Activated naive CD4-positive, alpha-beta T cell treated with anti-CD3 and anti-CD28 coated beads for 36 hours (primary cell): ENCODE measurements at regions of chr11 and their contacts with region 1.

Region 1: DNA sequence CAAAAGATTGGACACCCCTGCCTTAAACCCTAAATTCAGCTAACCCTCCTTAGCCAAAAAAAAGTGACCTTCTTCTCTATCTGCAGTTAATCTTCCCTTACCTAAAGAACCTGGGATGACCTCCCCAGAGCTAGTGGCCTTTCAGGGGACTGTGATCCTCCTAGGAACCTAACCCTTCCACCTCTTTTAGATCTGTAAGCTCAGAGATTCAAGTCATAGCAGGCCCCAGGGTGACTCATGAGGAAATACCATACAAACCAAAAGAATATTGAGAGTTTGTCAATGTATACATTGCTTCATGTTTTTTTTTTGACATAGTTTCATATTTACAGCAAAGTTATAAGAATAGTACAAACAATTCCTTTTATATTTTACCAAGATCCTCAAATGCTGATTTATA is 38.3 kb upstream of the CXCR5 start:
- DNase-seq: peak; percentile 69
- H3K4me3 Mint-ChIP-seq: no peak overlapping the region
- H3K27ac Mint-ChIP-seq: peak overlapping the region; percentile 63
- H3K4me1 Mint-ChIP-seq: peaks cover 38% of the 10 kb centered on the region
- H3K27me3 Mint-ChIP-seq: no peaks in the 10 kb centered on the region

Region 2: DNA sequence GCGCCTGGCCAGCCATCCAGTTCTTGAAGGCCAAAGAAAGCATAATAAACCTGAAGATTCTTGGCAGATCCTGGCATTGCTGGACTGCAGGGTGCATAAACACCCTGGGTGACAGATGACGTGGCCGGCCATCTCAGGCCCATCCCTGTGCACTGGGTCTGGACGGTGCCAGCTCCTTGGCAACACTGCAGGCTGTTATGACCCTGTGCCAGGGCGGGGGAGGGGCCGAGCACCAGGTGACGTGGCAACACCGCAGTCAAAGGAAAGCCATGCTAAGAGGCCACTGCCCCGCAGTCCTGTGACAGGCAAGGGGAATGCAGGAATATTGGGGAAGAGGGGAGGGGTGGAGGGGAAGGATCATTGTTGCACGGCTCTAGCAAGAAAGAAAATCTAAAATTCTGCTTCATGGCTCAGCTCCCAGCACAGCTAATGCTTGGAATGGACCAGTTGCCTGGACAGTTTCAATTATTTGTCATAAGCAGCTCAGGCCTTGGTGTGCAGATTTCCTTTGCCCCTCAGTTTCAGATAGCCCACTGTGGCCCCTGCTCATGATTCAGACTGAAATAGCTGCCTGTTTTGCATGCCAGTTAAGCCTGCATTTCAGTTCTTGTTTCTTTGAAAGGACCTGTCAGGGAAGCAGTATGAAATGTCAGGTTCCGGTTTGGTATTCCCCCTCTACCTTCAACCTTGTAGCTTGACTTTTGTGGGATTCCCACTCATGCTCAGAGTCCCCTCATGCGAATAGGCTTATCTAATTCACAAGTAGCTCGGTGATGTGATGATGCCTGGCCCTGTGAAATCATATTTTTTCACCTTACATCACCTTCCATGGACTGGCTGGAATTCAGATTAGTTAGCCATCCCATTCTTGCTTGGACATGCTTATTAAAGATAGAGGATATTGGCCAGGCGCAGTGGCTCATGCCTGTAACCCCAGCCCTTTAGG is 24.7 kb before region 1 on chr11:
- CTCF ChIA-PET with region 1: interaction called, 3 read pairs
- intact Hi-C with region 1: loop called (anchors 1 kb)
- DNase-seq: peak; percentile 50
- H3K4me3 Mint-ChIP-seq: no peak overlapping the region
- H3K27ac Mint-ChIP-seq: peak overlapping the region; percentile 74
- H3K4me1 Mint-ChIP-seq: peaks cover 20% of the 10 kb centered on the region
- H3K27me3 Mint-ChIP-seq: no peaks in the 10 kb centered on the region

Region 3: DNA sequence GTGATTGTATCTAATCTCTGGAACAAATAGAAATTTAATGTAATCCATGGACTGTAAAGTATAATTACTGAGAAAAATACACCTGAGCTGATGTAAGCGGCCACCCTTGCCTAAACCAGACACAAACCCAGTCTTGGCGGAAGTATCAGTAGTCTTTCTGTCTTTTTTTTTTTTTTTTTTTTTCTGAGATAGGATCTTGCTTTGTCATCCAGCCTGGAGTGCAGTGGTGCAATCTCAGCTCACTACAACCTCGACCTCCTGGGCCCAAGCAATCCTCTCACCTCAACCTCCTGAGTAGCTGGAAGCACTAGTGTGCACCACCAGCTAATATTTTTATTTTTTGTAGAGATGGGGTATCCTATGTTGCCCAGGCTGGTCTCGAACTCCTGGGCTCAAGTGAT is 32.8 kb after region 1 on chr11:
- CTCF ChIA-PET with region 1: interaction called, 9 read pairs
- intact Hi-C with region 1: loop called (anchors 1 kb)
- DNase-seq: peak; percentile 63
- H3K4me3 Mint-ChIP-seq: peak overlapping the region; percentile 31
- H3K27ac Mint-ChIP-seq: peak overlapping the region; percentile 99
- H3K4me1 Mint-ChIP-seq: peaks cover 96% of the 10 kb centered on the region
- H3K27me3 Mint-ChIP-seq: no peaks in the 10 kb centered on the region

Region 4: GRCh38 chr11:118883368-118884071 is 38.2 kb after region 1 on chr11 and contains the start of gene CXCR5:
- CTCF ChIA-PET with region 1: interaction called, 9 read pairs
- intact Hi-C with region 1: loop called (anchors 1 kb)
- DNase-seq: peak; percentile 87
- H3K4me3 Mint-ChIP-seq: peak within 1 kb of the TSS; percentile 83
- H3K27ac Mint-ChIP-seq: peak within 1 kb of the TSS; percentile 99
- H3K4me1 Mint-ChIP-seq: peaks cover 84% of the 10 kb centered on the region
- H3K27me3 Mint-ChIP-seq: no peaks in the 10 kb centered on the region
- total RNA-seq, gene CXCR5: 25.6 to 26.1 TPM